ENCODE measurements at regions of chr17 and their contacts with region 1.

Region 1: DNA sequence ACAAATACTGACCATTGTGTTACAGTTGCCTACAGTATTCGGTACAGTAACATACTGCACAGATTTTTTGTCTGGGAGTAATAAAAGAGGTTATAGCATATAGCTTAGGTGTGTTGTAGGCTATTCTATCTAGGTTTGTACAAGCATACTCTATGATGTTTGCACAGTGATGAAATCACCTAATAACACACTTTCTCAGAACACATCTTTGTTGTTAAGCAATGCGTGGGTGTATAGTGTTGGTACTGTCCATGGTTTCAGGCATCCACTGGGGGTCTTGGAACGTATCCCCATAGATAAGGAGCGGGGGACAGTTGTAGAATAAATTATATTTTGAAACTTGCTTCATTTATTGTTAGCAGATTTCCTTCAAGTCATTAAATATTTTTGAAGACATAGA is 293.3 kb upstream of the TBX2 start:
- DNase-seq: no peak
- ATAC-seq: no peak
- H3K4me3 ChIP-seq: no peak overlapping the region
- H3K27ac ChIP-seq: no peak overlapping the region
- H3K4me1 ChIP-seq: peaks cover 0 to 9% of the 10 kb centered on the region in 2 donors
- H3K27me3 ChIP-seq: no peaks in the 10 kb centered on the region

Region 2: GRCh38 chr17:61088553-61088952 is 17.8 kb before region 1 on chr17:
- intact Hi-C with region 1: loop called in 1 of 2 experiments (anchors 1 kb)
- DNase-seq: no peak
- ATAC-seq: no peak
- H3K4me3 ChIP-seq: no peak overlapping the region
- H3K27ac ChIP-seq: no peak overlapping the region
- H3K4me1 ChIP-seq: no peaks in the 10 kb centered on the region
- H3K27me3 ChIP-seq: no peaks in the 10 kb centered on the region

Region 3: GRCh38 chr17:61946359-61946758 is 840.0 kb after region 1 on chr17:
- intact Hi-C with region 1: no loop called
- DNase-seq: no peak
- ATAC-seq: no peak
- H3K4me3 ChIP-seq: no peak overlapping the region
- H3K27ac ChIP-seq: no peak overlapping the region
- H3K4me1 ChIP-seq: no peaks in the 10 kb centered on the region
- H3K27me3 ChIP-seq: no peaks in the 10 kb centered on the region

Measured in aorta (tissue), 5 donors.